Common myeloid progenitor, CD34-positive (primary cell): ENCODE measurements at regions of chr15 and their contacts with region 1.

Region 1: DNA sequence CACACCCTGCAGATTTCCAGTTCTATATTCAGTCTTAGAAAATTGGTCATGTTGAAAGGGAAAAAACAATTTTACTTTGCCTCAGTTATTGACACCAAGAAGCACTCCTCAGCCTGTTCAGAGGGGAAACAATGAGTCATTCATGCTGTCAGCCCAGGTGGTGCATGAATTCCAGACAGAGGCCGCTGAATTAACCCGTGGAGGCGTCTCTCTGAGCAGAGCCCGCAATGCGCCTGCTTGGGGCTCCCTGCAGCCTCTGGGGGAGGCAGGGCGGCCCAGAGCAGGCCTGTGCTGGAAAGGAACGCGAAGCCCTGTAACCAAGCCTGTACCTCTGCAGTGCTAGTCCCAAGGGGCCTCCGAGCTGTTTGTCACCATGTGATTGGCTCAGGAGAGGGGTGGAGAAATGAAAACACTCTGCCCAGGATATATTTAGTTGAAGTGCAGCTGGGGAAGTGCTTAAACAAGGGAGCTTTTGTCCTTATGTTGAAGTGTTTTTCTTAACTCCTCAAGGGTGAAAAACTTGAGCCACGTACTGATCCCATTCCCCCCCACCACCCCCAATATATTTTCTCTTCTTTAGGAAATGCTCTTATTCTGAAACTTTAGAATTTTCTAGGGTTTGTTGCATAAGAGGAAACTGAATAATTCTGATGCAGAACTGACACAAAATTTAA is 68.3 kb upstream of the CHD2 start:
- DNase-seq: peak; percentile 91 to 97 (median 95)
- H3K4me3 ChIP-seq: peak overlapping the region in 5 of 7 experiments; percentile 8 to 53 (median 42)
- H3K27ac ChIP-seq: peak overlapping the region; percentile 80 to 88
- H3K4me1 ChIP-seq: peaks cover 21 to 56% (median 39%) of the 10 kb centered on the region in 4 experiments
- H3K27me3 ChIP-seq: no peaks in the 10 kb centered on the region

Region 2: GRCh38 chr15:92595506-92596381 is 236.0 kb before region 1 on chr15:
- CTCF ChIA-PET with region 1: no interaction called
- POLR2A ChIA-PET with region 1: no interaction called
- DNase-seq: no peak
- H3K4me3 ChIP-seq: no peak overlapping the region
- H3K27ac ChIP-seq: no peak overlapping the region
- H3K4me1 ChIP-seq: peaks cover 0 to 2% (median 0%) of the 10 kb centered on the region in 4 experiments
- H3K27me3 ChIP-seq: peaks cover 0 to 7% (median 0%) of the 10 kb centered on the region in 5 experiments

Region 3: DNA sequence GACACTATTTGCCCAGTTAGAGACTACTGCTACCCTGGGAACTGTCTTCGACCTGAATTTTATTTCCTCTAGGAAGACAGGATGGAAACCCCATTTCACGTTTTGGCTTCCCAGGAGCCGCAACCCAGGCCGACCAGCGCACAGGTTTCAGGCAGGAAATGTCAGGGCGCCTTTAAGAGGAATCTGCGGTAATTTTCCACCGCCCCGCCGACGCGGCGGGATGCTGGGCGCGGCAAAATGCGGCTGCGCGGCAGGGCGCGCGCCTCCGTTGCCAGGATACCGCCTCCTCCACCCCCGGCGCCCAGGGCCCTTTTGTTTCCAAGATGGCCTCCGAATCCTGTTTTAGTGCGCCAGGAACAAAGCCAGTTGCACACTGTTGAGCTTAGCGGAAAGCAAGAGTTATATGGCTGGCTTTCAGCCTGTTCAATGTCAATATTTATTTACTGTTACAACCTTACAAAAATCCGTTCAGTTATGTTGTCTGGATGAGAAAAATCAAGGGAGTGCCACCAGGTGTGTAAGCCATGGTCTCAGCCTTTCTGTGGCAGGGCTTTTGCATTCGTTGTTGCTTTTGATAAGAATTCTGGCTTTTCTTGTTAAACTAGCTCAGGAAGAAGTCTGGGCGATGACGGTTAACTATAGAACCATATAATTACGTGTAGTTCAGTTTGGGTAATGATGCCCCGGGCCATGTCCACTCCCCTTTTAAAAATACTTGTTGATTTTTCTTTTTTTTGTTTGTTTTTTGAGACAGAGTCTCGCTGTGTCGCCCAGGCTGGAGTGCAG is 11.4 kb before region 1 on chr15:
- CTCF ChIA-PET with region 1: interaction called, 11 read pairs
- POLR2A ChIA-PET with region 1: interaction called, 5 read pairs
- DNase-seq: peak; percentile 83 to 88 (median 88)
- H3K4me3 ChIP-seq: peak overlapping the region in 6 of 7 experiments; percentile 61 to 93 (median 78)
- H3K27ac ChIP-seq: peak overlapping the region; percentile 69 to 87
- H3K4me1 ChIP-seq: peaks cover 13 to 54% (median 29%) of the 10 kb centered on the region in 4 experiments
- H3K27me3 ChIP-seq: no peaks in the 10 kb centered on the region

Region 4: DNA sequence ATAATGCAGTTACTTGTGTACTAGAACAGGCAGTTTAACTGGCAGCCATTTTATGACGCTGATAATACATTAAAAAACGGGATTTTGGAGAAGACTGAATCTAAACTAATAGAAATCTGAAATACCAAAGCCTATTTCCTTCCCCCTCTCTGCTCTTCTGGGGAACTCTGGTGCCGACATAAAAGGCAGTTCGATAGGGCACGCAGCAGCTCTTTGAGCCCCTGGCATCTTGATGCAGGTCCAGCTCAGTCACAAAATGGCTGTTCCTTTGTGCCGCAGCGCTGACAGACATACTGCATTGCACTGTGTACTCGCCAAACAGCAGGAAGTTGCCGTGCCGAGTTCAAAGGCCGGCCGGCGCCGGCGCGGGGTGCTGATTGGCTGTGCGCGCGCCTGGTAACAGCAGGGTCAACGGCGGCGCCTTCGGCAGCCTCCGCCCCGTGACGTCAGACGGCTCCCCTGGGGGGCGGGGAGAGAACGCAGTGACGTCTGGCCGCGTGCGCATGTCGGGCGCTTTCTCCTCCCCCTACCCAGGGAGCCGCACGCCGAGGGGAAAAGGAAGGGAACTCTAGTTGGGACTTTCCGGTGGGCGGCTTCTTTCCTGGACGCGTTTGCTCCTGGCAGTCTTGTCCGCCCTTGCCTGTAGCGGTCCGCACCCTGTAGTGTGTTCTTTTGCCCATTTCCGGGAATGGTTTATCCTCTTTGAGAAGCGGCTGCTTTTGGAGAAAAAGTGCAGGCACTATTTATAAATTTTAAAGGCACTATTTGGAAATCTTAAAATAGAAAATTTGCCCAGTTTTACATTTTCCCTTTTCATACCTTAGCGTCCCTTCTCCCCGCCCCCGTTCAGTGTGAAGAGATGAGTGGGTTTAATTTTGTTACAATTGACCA is 72.4 kb after region 1 on chr15:
- CTCF ChIA-PET with region 1: interaction called, 4 read pairs
- POLR2A ChIA-PET with region 1: interaction called, 10 read pairs
- DNase-seq: peak; percentile 98 to 99 (median 99)
- H3K4me3 ChIP-seq: peak overlapping the region; percentile 30 to 100 (median 92)
- H3K27ac ChIP-seq: peak overlapping the region; percentile 99 to 100
- H3K4me1 ChIP-seq: peaks cover 46 to 65% (median 55%) of the 10 kb centered on the region in 4 experiments
- H3K27me3 ChIP-seq: no peaks in the 10 kb centered on the region